GM10248 (cell line): ENCODE measurements at regions of chr17 and their contacts with region 1.

Region 1: GRCh38 chr17:28335201-28335955 is at the starts of genes IFT20 and TNFAIP1:
- DNase-seq: peak; percentile 97
- CTCF ChIP-seq: peak; percentile 9

Region 2: DNA sequence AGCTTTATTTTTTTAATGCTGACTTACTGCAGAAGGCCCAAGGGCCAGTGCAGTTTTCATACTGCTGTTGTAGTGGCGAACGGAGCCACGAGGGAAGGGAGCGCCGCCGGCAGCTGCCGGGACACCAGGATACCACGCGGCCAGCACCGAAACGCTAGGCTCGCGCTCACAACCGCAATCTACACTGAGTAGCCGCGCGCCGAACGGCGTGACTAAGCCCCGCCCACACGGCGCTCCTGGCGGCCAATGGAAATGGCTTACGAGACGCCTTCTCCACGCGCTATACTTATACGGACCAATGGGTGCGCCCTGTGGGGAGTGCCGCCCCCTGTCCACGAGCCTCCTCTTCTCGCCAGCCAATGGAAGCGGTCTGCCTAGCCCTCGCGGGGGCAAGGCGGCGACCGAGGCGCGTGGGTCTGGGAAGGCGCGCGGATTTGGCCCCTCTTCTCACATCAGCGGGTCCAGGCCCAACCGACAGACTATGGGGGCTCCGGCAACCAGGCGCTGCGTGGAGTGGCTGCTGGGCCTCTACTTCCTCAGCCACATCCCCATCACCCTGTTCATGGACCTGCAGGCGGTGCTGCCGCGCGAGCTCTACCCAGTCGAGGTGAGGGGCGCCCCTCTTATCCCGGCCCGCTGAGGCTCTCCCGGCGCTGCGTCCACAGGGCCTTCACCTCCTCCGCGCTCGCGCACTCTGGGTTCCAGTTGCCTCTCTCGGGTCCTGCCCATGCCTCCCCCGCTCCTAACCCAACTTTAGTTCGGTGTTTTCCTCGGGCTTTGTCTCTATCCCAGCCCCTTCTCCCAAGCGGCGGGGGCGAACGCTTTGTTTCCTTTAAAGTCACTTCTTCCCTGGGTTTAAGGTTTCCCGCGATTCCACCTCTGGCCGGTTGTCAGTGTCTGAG is 16.4 kb before region 1 on chr17 and contains the start of gene TMEM97:
- CTCF ChIA-PET with region 1: interaction called, 15 read pairs
- POLR2A ChIA-PET with region 1: interaction called, 4 read pairs
- DNase-seq: peak; percentile 98
- CTCF ChIP-seq: no peak

Region 3: DNA sequence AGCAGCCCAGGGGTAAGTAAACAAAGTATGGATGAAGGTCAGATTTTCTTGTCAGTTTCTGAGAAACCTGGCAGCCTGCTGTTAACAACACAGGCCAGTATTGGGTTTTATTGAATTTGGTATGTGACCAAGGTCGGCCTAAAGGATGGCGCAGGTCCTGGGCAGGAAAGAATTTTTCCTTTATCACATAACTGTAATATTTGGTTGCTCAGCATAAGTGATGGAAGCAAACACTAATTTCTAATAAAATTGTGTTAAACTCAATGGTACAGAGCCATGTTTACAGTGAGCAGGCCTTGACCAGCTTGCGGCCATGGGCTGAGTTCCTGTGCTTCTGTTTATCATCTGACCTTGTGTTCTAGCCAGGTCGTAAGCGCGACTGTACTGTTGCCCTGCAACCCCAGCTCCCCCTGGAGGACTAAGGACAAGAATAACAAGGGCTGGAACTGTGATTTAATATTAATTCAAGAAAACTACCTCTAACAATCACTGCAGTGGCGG is 11.4 kb after region 1 on chr17:
- CTCF ChIA-PET with region 1: interaction called, 18 read pairs
- POLR2A ChIA-PET with region 1: interaction called, 13 read pairs
- DNase-seq: no peak
- CTCF ChIP-seq: peak; percentile 21

Region 4: GRCh38 chr17:28357061-28357900 is 21.9 kb after region 1 on chr17 and contains the start of gene POLDIP2:
- CTCF ChIA-PET with region 1: interaction called, 19 read pairs
- POLR2A ChIA-PET with region 1: interaction called, 27 read pairs
- DNase-seq: peak; percentile 98
- CTCF ChIP-seq: no peak